ENCODE measurements at regions of chr11 and their contacts with region 1.

Region 1: DNA sequence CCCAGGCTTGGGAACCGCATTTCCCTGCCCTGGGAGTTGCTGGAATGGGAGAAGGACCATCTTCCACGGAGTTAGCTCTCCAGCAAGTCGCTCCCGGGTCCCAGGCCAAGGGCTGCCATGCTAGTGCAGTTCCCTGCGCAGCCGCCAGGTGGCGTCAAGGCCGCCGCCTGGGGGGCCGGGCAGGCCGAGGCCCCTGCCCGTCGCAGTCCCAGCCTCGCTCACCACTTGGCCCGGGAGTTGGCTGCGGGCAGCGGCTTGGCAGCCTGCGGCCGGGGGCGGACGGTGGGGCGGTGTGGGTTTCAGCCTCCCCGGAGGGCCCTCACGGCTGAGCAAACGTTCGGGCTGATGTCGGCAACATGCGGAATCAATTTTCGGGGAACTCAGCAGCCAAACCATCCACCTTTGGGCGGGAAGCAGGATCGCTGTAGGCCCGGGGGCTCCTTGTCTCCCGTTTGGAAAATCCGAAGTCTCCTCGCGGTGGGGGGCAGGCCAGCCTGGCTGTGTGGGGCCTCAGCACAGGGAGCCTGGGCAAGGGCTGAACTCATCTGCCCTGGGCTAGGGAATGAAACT is 415.1 kb downstream of the SOX6 start:
- DNase-seq: peak; percentile 40
- H3K4me3 ChIP-seq: no peak overlapping the region
- H3K27ac ChIP-seq: no peak overlapping the region
- H3K4me1 ChIP-seq: no peaks in the 10 kb centered on the region
- H3K27me3 ChIP-seq: no peaks in the 10 kb centered on the region
- CTCF ChIP-seq: peak; percentile 95 to 97
- POLR2A ChIP-seq: no peak

Region 2: GRCh38 chr11:15819679-15820286 is 121.5 kb before region 1 on chr11:
- CTCF ChIA-PET with region 1: no interaction called
- POLR2A ChIA-PET with region 1: no interaction called
- dilution Hi-C with region 1: no loop called
- intact Hi-C with region 1: loop called (anchors 1 kb)
- DNase-seq: peak; percentile 61
- H3K4me3 ChIP-seq: no peak overlapping the region
- H3K27ac ChIP-seq: no peak overlapping the region
- H3K4me1 ChIP-seq: no peaks in the 10 kb centered on the region
- H3K27me3 ChIP-seq: peaks cover 3 to 16% of the 10 kb centered on the region in 2 experiments
- CTCF ChIP-seq: peak; percentile 82 to 95
- POLR2A ChIP-seq: no peak

Region 3: DNA sequence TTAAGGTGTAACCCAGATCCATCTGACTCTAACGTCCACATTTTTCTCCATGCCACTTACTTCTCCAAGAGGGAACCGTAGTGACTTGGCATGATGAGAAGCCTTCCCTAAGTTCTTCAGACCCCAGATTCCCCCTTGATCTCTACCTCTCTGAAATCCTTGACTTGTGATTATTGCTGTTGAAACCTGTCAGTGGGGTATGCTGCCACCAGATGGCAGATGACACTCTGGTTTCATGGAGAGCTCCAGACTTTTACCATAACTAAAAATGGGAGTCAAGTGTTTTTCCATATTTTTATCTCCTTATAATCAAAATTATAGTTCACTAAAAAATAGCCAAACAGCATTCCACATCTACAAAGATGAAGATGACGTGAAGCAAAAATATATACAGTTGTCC is 89.1 kb before region 1 on chr11:
- CTCF ChIA-PET with region 1: no interaction called
- POLR2A ChIA-PET with region 1: no interaction called
- dilution Hi-C with region 1: no loop called
- intact Hi-C with region 1: no loop called
- DNase-seq: no peak
- H3K4me3 ChIP-seq: no peak overlapping the region
- H3K27ac ChIP-seq: no peak overlapping the region
- H3K4me1 ChIP-seq: no peaks in the 10 kb centered on the region
- H3K27me3 ChIP-seq: peaks cover 0 to 2% of the 10 kb centered on the region in 2 experiments
- CTCF ChIP-seq: peak; percentile 21 to 30
- POLR2A ChIP-seq: no peak

Region 4: DNA sequence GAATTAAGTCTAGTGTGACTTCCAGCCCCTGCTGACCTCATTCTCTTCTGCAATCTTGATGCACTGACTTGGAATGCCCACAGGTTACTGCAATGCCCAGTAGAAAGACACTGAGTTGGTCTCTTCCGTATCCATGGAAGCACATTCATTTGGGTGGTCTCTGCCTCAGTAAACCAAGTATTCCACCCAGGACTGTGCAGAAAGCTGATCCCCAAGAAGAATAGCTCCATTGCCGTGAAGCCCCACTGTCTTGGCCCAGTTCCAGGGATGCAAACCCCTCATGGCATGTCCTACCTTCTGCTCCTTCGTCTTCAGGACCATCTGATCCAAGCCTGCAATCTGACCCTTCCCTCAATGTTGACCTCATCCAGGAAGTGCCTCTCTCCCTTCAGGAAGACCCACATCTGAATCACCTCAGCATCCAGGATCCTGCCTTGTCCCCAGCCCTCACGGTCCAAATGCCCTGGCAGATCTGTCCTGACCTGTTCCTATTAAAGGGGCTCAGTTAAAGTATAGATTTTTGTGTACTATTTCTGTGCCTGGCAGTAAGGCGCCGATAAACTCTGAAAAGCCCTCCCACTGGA is 10.8 kb before region 1 on chr11:
- CTCF ChIA-PET with region 1: interaction called, 10 read pairs
- POLR2A ChIA-PET with region 1: no interaction called
- dilution Hi-C with region 1: no loop called
- intact Hi-C with region 1: no loop called
- DNase-seq: no peak
- H3K4me3 ChIP-seq: no peak overlapping the region
- H3K27ac ChIP-seq: no peak overlapping the region
- H3K4me1 ChIP-seq: no peaks in the 10 kb centered on the region
- H3K27me3 ChIP-seq: no peaks in the 10 kb centered on the region
- CTCF ChIP-seq: no peak
- POLR2A ChIP-seq: no peak

Region 5: DNA sequence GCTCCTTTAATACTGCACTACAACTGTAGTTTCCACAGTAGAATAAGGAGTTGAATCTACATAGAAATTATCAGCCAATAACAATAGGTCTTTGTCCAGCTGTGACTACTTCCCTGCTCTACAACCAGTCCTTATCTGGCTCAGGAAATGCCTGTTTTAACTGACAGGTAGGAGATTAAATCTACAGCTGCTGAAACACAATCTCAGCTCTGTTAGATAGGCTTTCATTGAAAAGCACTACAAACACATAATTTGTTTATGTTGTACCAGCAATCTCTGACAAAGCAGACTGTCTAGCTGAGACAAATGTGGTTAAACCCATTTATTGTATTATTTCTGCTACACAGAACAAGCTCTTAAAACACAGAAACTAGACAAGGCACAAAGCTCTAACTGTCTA is 185.1 kb after region 1 on chr11:
- CTCF ChIA-PET with region 1: no interaction called
- POLR2A ChIA-PET with region 1: no interaction called
- dilution Hi-C with region 1: no loop called
- intact Hi-C with region 1: no loop called
- DNase-seq: peak; percentile 28
- H3K4me3 ChIP-seq: no peak overlapping the region
- H3K27ac ChIP-seq: no peak overlapping the region
- H3K4me1 ChIP-seq: no peaks in the 10 kb centered on the region
- H3K27me3 ChIP-seq: no peaks in the 10 kb centered on the region
- CTCF ChIP-seq: no peak
- POLR2A ChIP-seq: no peak

Region 6: DNA sequence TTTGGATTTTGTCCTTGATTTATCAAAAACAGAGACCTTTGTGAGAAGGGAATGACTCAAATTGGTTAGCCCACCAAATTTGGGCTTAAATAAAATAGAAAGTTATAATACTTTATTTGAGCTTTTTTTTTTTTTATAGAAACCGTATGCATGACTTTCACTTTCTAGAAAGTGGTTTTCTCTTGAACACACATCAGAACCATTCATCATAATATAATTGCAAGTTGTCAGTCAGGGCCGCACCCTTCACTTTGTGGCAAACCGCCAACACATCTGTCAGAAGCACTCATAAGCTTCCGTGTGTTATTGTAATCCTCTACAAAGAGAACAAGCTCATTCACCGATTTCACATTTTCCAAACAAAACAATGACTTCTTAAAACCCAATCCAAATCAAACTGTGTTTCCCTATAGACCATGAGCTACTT is 339.0 kb after region 1 on chr11:
- CTCF ChIA-PET with region 1: no interaction called
- POLR2A ChIA-PET with region 1: no interaction called
- dilution Hi-C with region 1: no loop called
- intact Hi-C with region 1: loop called (anchors 10 kb)
- DNase-seq: peak; percentile 55
- H3K4me3 ChIP-seq: peak overlapping the region in 1 of 3 experiments; percentile 32
- H3K27ac ChIP-seq: no peak overlapping the region
- H3K4me1 ChIP-seq: peaks cover 3% of the 10 kb centered on the region
- H3K27me3 ChIP-seq: no peaks in the 10 kb centered on the region
- CTCF ChIP-seq: no peak
- POLR2A ChIP-seq: no peak

Measured in endothelial cell of umbilical vein (primary cell).